CD4-positive, alpha-beta T cell (primary cell): ENCODE measurements at regions of chr3 and their contacts with region 1.

Region 1: DNA sequence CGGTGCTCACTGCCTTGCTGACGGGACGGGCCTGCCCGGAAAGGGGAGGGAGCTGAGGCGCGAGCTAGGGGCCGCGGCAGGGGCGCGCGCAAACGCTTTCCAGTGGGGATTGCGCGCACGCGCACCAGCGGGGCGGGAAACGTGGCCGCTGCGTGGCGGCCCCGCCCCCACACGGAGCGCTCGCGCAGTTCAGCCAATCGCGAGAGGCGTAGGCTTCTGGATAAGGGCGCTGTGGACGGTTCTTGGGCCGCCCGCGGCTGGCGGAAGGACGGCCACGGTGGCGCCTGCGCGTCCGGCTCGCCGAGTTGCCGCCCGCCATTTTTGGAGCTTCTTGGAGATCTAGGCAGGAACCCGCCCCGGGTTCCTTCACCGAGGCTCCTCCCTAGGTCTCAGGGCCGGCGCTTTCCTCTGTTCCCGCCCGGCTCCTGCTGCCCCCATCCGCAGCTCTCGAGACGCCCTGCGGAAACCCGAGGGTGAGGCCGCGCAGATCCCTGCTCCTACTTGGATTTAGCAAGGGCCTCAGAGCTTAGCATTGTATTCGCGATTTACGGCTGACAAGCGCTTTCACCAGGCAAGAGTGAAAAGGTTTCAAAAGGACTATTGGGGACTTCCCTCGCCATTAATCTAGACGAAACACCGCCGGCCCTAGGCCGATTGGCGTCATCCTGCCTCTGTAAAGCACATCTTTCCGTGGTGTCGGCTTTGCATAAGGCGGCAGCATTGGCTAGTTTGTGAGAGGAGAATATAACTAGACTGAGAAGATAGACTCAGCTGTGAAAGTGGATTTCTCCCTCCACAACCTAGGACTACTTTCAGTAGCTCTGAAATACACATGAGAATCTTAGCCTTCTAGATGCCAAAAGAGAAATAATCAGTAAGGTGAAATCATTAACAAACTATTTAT is 496 bp upstream of the STAG1 start:
- DNase-seq: peak; percentile 96 to 100 (median 99)
- ATAC-seq: peak; percentile 79
- H3K4me3 ChIP-seq: peak overlapping the region; percentile 90
- H3K4me3 Mint-ChIP-seq: peak overlapping the region; percentile 99
- H3K27ac ChIP-seq: peak overlapping the region; percentile 98 to 99
- H3K27ac Mint-ChIP-seq: peak overlapping the region; percentile 97
- H3K4me1 ChIP-seq: peaks cover 33% of the 10 kb centered on the region
- H3K4me1 Mint-ChIP-seq: peaks cover 46% of the 10 kb centered on the region
- H3K27me3 ChIP-seq: no peaks in the 10 kb centered on the region
- H3K27me3 Mint-ChIP-seq: no peaks in the 10 kb centered on the region
- CTCF ChIP-seq: peak; percentile 28

Region 2: GRCh38 chr3:136196401-136197158 is 556.1 kb before region 1 on chr3:
- CTCF ChIA-PET with region 1: interaction called, 12 read pairs
- POLR2A ChIA-PET with region 1: interaction called, 137 read pairs
- intact Hi-C with region 1: loop called (anchors 2 kb)
- DNase-seq: peak; percentile 95 to 100 (median 98)
- ATAC-seq: peak; percentile 62
- H3K4me3 ChIP-seq: peak overlapping the region; percentile 95
- H3K4me3 Mint-ChIP-seq: peak overlapping the region; percentile 98
- H3K27ac ChIP-seq: peak overlapping the region; percentile 91 to 99
- H3K27ac Mint-ChIP-seq: peak overlapping the region; percentile 98
- H3K4me1 ChIP-seq: peaks cover 16% of the 10 kb centered on the region
- H3K4me1 Mint-ChIP-seq: peaks cover 36% of the 10 kb centered on the region
- H3K27me3 ChIP-seq: no peaks in the 10 kb centered on the region
- H3K27me3 Mint-ChIP-seq: peaks cover 5% of the 10 kb centered on the region
- CTCF ChIP-seq: no peak

Region 3: GRCh38 chr3:136545664-136546268 is 206.9 kb before region 1 on chr3:
- CTCF ChIA-PET with region 1: interaction called, 13 read pairs
- POLR2A ChIA-PET with region 1: interaction called, 3 read pairs
- intact Hi-C with region 1: loop called in 1 of 2 experiments (anchors 10 kb)
- DNase-seq: peak in 1 of 14 experiments; percentile 11
- ATAC-seq: no peak
- H3K4me3 ChIP-seq: no peak overlapping the region
- H3K4me3 Mint-ChIP-seq: no peak overlapping the region
- H3K27ac ChIP-seq: no peak overlapping the region
- H3K27ac Mint-ChIP-seq: no peak overlapping the region
- H3K4me1 ChIP-seq: no peaks in the 10 kb centered on the region
- H3K4me1 Mint-ChIP-seq: peaks cover 43% of the 10 kb centered on the region
- H3K27me3 ChIP-seq: no peaks in the 10 kb centered on the region
- H3K27me3 Mint-ChIP-seq: no peaks in the 10 kb centered on the region
- CTCF ChIP-seq: no peak

Region 4: GRCh38 chr3:136728918-136729317 is 23.8 kb before region 1 on chr3:
- CTCF ChIA-PET with region 1: interaction called, 36 read pairs
- POLR2A ChIA-PET with region 1: interaction called, 8 read pairs
- intact Hi-C with region 1: no loop called
- DNase-seq: no peak
- ATAC-seq: no peak
- H3K4me3 ChIP-seq: no peak overlapping the region
- H3K4me3 Mint-ChIP-seq: no peak overlapping the region
- H3K27ac ChIP-seq: no peak overlapping the region
- H3K27ac Mint-ChIP-seq: peak overlapping the region; percentile 12
- H3K4me1 ChIP-seq: peaks cover 45% of the 10 kb centered on the region
- H3K4me1 Mint-ChIP-seq: peaks cover 74% of the 10 kb centered on the region
- H3K27me3 ChIP-seq: no peaks in the 10 kb centered on the region
- H3K27me3 Mint-ChIP-seq: no peaks in the 10 kb centered on the region
- CTCF ChIP-seq: no peak

Region 5: GRCh38 chr3:136909187-136909586 is 156.5 kb after region 1 on chr3:
- CTCF ChIA-PET with region 1: interaction called, 4 read pairs
- POLR2A ChIA-PET with region 1: interaction called, 12 read pairs
- intact Hi-C with region 1: no loop called
- DNase-seq: peak in 1 of 14 experiments; percentile 27
- ATAC-seq: no peak
- H3K4me3 ChIP-seq: no peak overlapping the region
- H3K4me3 Mint-ChIP-seq: peak overlapping the region; percentile 17
- H3K27ac ChIP-seq: peak overlapping the region in 1 of 2 donors; percentile 38
- H3K27ac Mint-ChIP-seq: peak overlapping the region; percentile 32
- H3K4me1 ChIP-seq: peaks cover 28% of the 10 kb centered on the region
- H3K4me1 Mint-ChIP-seq: peaks cover 80% of the 10 kb centered on the region
- H3K27me3 ChIP-seq: no peaks in the 10 kb centered on the region
- H3K27me3 Mint-ChIP-seq: no peaks in the 10 kb centered on the region
- CTCF ChIP-seq: no peak

Region 6: GRCh38 chr3:137013955-137014688 is 261.4 kb after region 1 on chr3:
- CTCF ChIA-PET with region 1: interaction called, 43 read pairs
- POLR2A ChIA-PET with region 1: interaction called, 45 read pairs
- intact Hi-C with region 1: loop called in 1 of 2 experiments (anchors 1 kb)
- DNase-seq: peak; percentile 67 to 91 (median 82)
- ATAC-seq: peak; percentile 89
- H3K4me3 ChIP-seq: peak overlapping the region; percentile 42
- H3K4me3 Mint-ChIP-seq: peak overlapping the region; percentile 67
- H3K27ac ChIP-seq: no peak overlapping the region
- H3K27ac Mint-ChIP-seq: no peak overlapping the region
- H3K4me1 ChIP-seq: peaks cover 9% of the 10 kb centered on the region
- H3K4me1 Mint-ChIP-seq: peaks cover 9% of the 10 kb centered on the region
- H3K27me3 ChIP-seq: no peaks in the 10 kb centered on the region
- H3K27me3 Mint-ChIP-seq: no peaks in the 10 kb centered on the region
- CTCF ChIP-seq: peak; percentile 87